Activated CD4-positive, alpha-beta T cell treated with anti-CD3 and anti-CD28 coated beads for 36 hours (primary cell): ENCODE measurements at regions of chr2 and their contacts with region 1.

Region 1: GRCh38 chr2:159807183-159808031 is 9.4 kb upstream of the CD302 start:
- DNase-seq: peak; percentile 41
- ATAC-seq: no peak
- H3K4me3 Mint-ChIP-seq: no peak overlapping the region
- H3K27ac Mint-ChIP-seq: no peak overlapping the region
- H3K4me1 Mint-ChIP-seq: peaks cover 4% of the 10 kb centered on the region
- H3K27me3 Mint-ChIP-seq: no peaks in the 10 kb centered on the region

Region 2: GRCh38 chr2:159131914-159132281 is 675.5 kb before region 1 on chr2:
- CTCF ChIA-PET with region 1: no interaction called
- POLR2A ChIA-PET with region 1: no interaction called
- intact Hi-C with region 1: loop called in 1 of 2 experiments (anchors 10 kb)
- DNase-seq: no peak
- ATAC-seq: no peak
- H3K4me3 Mint-ChIP-seq: no peak overlapping the region
- H3K27ac Mint-ChIP-seq: no peak overlapping the region
- H3K4me1 Mint-ChIP-seq: peaks cover 2% of the 10 kb centered on the region
- H3K27me3 Mint-ChIP-seq: no peaks in the 10 kb centered on the region

Region 3: DNA sequence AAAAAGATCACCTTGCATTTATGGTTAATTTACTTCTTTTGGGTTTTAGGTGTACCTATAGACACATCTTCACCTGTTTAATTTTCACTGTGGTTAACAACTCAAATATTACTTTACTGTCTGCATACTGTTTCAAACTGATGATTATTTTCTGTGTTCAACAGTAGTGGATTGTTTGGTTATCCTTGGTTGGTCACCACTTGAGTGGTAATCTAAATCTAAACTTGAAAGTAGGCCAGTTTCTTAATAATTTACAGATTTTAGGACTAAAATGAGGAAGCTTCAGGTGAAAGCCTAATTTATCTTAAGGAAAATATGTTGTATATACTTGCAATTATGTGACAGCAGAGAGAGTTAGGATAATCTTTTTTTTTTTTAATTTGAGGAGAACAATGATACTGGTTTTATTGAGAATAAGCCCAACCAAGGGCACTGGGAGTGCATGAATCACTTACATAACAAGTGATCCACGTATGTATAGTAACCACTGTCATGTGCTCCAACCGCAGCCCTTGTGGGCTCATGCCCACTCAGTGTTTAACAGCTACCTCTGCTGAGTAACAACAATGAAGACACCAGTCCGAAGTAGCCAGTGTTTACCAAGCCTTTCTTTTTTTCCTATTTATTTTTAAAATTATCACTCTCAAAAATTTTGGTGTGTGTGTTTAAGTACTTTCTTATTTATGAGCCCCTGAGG is 489.9 kb before region 1 on chr2:
- CTCF ChIA-PET with region 1: no interaction called
- POLR2A ChIA-PET with region 1: no interaction called
- intact Hi-C with region 1: no loop called
- DNase-seq: no peak
- ATAC-seq: no peak
- H3K4me3 Mint-ChIP-seq: no peak overlapping the region
- H3K27ac Mint-ChIP-seq: no peak overlapping the region
- H3K4me1 Mint-ChIP-seq: no peaks in the 10 kb centered on the region
- H3K27me3 Mint-ChIP-seq: no peaks in the 10 kb centered on the region

Region 4: GRCh38 chr2:159921752-159922404 is 114.5 kb after region 1 on chr2:
- CTCF ChIA-PET with region 1: interaction called, 4 read pairs
- POLR2A ChIA-PET with region 1: no interaction called
- intact Hi-C with region 1: loop called in 1 of 2 experiments (anchors 5 kb)
- DNase-seq: peak; percentile 91
- ATAC-seq: peak; percentile 67
- H3K4me3 Mint-ChIP-seq: peak overlapping the region; percentile 1
- H3K27ac Mint-ChIP-seq: peak overlapping the region; percentile 58
- H3K4me1 Mint-ChIP-seq: peaks cover 41% of the 10 kb centered on the region
- H3K27me3 Mint-ChIP-seq: peaks cover 20% of the 10 kb centered on the region

Region 5: DNA sequence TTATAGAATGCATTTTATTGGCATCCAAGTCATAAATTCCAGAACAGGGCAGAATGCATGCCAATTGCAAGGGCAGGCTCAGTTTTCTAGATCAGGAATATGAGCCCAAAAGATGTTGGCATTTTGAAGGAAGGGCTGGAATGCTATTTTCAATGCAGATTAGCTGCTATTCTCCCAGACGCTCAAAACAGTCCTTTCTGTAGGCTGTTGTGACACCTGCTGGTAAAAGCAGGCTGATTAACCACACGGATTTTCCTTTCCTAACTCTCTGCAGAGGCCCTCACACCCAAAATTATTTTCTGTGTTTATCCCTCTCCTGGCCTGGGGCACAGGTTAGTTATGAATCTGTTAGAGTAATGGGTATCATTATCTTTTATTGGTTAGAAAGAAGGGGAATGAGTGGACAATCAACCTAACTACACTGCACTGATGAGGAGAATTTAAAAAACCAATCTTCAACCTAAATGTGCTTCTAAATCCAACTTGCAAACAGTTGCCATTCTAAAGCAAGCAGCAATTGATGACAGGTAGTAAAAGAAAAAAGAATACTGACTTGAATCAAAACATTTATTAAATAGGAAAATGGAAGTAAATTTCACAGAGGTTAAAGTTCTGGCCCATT is 161.0 kb after region 1 on chr2:
- CTCF ChIA-PET with region 1: interaction called, 9 read pairs
- POLR2A ChIA-PET with region 1: no interaction called
- intact Hi-C with region 1: loop called in 1 of 2 experiments (anchors 5 kb)
- DNase-seq: peak; percentile 36
- ATAC-seq: peak; percentile 66
- H3K4me3 Mint-ChIP-seq: no peak overlapping the region
- H3K27ac Mint-ChIP-seq: no peak overlapping the region
- H3K4me1 Mint-ChIP-seq: peaks cover 10% of the 10 kb centered on the region
- H3K27me3 Mint-ChIP-seq: no peaks in the 10 kb centered on the region